PC-9 (cell line): ENCODE measurements at regions of chr6 and their contacts with region 1.

Region 1: DNA sequence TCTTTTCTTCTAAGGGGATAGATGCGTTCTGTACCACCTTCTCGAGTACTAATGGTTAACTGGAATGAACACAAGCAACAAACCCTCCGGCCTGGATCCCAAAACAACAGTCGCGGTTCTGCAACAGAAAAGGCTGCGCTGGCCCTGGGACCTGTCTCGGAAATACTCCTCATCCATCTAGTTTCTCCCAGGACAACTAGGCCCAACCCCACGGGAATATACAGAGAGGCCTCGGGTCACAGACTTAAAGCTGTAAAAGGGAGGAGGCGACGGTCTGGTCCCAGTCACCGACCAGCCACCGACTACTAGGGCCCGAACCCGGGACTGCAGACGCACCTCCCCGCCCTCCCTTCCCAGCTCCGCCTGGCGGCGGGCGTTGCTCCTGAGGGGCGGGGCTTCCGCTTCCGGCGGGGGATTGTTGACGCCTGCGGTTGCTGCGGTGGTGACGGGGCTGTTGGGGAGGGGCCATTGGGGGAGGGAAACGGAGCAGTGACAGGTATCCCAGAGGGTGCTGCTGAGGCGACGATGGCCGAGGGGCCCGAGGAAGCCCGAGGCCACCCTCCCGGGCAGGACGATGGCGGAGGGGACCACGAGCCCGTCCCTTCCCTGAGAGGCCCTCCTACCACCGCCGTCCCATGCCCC is at the start of gene FAM8A1:
- DNase-seq: peak; percentile 76 to 95
- H3K4me3 ChIP-seq: peak within 1 kb of the TSS; percentile 80
- H3K27ac ChIP-seq: no peak within 1 kb of the TSS
- H3K4me1 ChIP-seq: peaks cover 11% of the 10 kb centered on the region; the same call in 1 of the 2 replicates
- H3K27me3 ChIP-seq: no peaks in the 10 kb centered on the region
- CTCF ChIP-seq: no peak; the same call in 1 of the 2 replicates
- total RNA-seq, gene FAM8A1: 8.1 and 11.9 TPM in 2 replicates

Region 2: GRCh38 chr6:16770701-16771569 is 829.1 kb before region 1 on chr6:
- CTCF ChIA-PET with region 1: no interaction called
- POLR2A ChIA-PET with region 1: no interaction called
- intact Hi-C with region 1: no loop called
- DNase-seq: peak; percentile 42 to 57
- H3K4me3 ChIP-seq: no peak overlapping the region; the same call in 1 of the 2 replicates
- H3K27ac ChIP-seq: peak overlapping the region; percentile 97
- H3K4me1 ChIP-seq: peaks cover 53% of the 10 kb centered on the region
- H3K27me3 ChIP-seq: no peaks in the 10 kb centered on the region
- CTCF ChIP-seq: peak; percentile 80

Region 3: DNA sequence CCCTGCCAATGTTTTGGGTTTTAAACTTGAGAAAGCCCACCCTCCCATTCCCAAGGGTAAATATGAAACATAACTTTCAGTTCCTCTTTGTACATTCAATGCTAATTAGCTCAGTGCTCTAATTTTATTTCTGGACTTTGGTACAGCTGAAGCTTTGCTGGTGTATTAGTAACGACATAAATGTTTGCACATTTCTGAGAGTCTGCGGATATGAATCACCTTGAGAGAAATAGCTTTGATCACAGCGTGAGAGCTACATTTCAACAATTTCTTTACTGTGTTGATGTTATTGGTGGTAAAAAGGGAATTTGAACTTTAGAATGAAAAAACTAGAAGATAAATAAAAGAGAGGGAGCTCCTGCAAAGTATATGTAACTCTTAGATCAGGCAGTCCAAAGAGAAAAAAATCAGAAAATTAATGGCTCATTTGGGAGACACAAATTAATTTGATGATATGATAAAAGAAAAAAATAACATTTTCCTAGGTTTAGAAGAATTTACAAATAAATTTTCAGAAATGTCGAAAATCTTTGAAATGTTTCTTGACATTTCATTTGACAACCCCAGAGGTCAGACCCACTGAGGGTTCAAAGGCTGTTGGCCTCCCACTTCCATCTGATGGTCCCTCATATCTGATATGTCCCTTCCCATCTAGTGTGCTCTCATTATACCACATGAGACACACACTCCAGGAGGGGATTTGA is 245.2 kb before region 1 on chr6:
- CTCF ChIA-PET with region 1: no interaction called
- POLR2A ChIA-PET with region 1: no interaction called
- intact Hi-C with region 1: no loop called
- DNase-seq: no peak
- H3K4me3 ChIP-seq: no peak overlapping the region
- H3K27ac ChIP-seq: no peak overlapping the region
- H3K4me1 ChIP-seq: no peaks in the 10 kb centered on the region
- H3K27me3 ChIP-seq: no peaks in the 10 kb centered on the region
- CTCF ChIP-seq: no peak

Region 4: GRCh38 chr6:17392978-17393891 is 206.8 kb before region 1 on chr6 and contains the start of gene CAP2:
- CTCF ChIA-PET with region 1: no interaction called
- POLR2A ChIA-PET with region 1: interaction called, 24 read pairs
- intact Hi-C with region 1: no loop called
- DNase-seq: peak; percentile 45 to 74
- H3K4me3 ChIP-seq: peak within 1 kb of the TSS; percentile 74
- H3K27ac ChIP-seq: peak within 1 kb of the TSS; percentile 50
- H3K4me1 ChIP-seq: peaks cover 37% of the 10 kb centered on the region
- H3K27me3 ChIP-seq: no peaks in the 10 kb centered on the region
- CTCF ChIP-seq: no peak
- total RNA-seq, gene CAP2: 10.0 and 12.0 TPM in 2 replicates

Region 5: GRCh38 chr6:17589406-17590096 is 10.5 kb before region 1 on chr6:
- CTCF ChIA-PET with region 1: interaction called, 21 read pairs
- POLR2A ChIA-PET with region 1: interaction called, 11 read pairs
- intact Hi-C with region 1: no loop called
- DNase-seq: peak; percentile 73 to 94
- H3K4me3 ChIP-seq: no peak overlapping the region
- H3K27ac ChIP-seq: peak overlapping the region; percentile 24; the same call in 1 of the 2 replicates
- H3K4me1 ChIP-seq: peaks cover 11% of the 10 kb centered on the region
- H3K27me3 ChIP-seq: no peaks in the 10 kb centered on the region
- CTCF ChIP-seq: no peak; the same call in 1 of the 2 replicates

Region 6: DNA sequence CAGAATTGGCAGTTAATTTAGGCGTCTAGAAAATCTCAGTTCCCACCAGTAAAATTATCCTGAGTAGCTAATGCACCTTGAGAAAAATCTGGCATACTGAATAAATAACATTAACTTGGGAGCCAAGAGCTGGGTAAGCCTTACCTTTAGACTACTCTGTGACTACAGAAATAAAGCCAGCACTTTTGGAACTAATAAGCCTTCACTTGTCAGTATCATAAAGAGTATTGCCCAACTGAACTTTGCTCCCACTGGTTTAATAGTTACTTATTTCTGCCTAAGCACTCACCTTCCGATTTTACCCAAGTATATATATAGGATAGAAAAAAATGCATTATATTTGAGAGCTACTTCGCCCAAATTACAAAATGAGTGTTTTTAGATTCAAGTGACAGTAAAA is 10.8 kb after region 1 on chr6:
- CTCF ChIA-PET with region 1: interaction called, 16 read pairs
- POLR2A ChIA-PET with region 1: no interaction called
- intact Hi-C with region 1: no loop called
- DNase-seq: no peak
- H3K4me3 ChIP-seq: no peak overlapping the region
- H3K27ac ChIP-seq: no peak overlapping the region
- H3K4me1 ChIP-seq: no peaks in the 10 kb centered on the region
- H3K27me3 ChIP-seq: no peaks in the 10 kb centered on the region
- CTCF ChIP-seq: no peak

Region 7: GRCh38 chr6:17688481-17688880 is 88.5 kb after region 1 on chr6:
- CTCF ChIA-PET with region 1: no interaction called
- POLR2A ChIA-PET with region 1: interaction called, 11 read pairs
- intact Hi-C with region 1: no loop called
- DNase-seq: no peak
- H3K4me3 ChIP-seq: no peak overlapping the region
- H3K27ac ChIP-seq: no peak overlapping the region
- H3K4me1 ChIP-seq: no peaks in the 10 kb centered on the region
- H3K27me3 ChIP-seq: no peaks in the 10 kb centered on the region
- CTCF ChIP-seq: no peak

Region 8: GRCh38 chr6:18166312-18167036 is 566.5 kb after region 1 on chr6:
- CTCF ChIA-PET with region 1: no interaction called
- POLR2A ChIA-PET with region 1: interaction called, 17 read pairs
- intact Hi-C with region 1: no loop called
- DNase-seq: no peak
- H3K4me3 ChIP-seq: no peak overlapping the region
- H3K27ac ChIP-seq: no peak overlapping the region
- H3K4me1 ChIP-seq: 0 out of 2 replicates have a peak, but pooled peaks cover 2% of the 10 kb centered on the region
- H3K27me3 ChIP-seq: no peaks in the 10 kb centered on the region
- CTCF ChIP-seq: no peak

Region 9: GRCh38 chr6:18186033-18186432 is 586.0 kb after region 1 on chr6:
- CTCF ChIA-PET with region 1: interaction called, 14 read pairs
- POLR2A ChIA-PET with region 1: no interaction called
- intact Hi-C with region 1: no loop called
- DNase-seq: peak; percentile 46 to 65
- H3K4me3 ChIP-seq: no peak overlapping the region
- H3K27ac ChIP-seq: peak overlapping the region; percentile 63
- H3K4me1 ChIP-seq: peaks cover 23% of the 10 kb centered on the region
- H3K27me3 ChIP-seq: no peaks in the 10 kb centered on the region
- CTCF ChIP-seq: no peak